Endothelial cell of umbilical vein (primary cell): ENCODE measurements at regions of chr1 and their contacts with region 1.

Region 1: DNA sequence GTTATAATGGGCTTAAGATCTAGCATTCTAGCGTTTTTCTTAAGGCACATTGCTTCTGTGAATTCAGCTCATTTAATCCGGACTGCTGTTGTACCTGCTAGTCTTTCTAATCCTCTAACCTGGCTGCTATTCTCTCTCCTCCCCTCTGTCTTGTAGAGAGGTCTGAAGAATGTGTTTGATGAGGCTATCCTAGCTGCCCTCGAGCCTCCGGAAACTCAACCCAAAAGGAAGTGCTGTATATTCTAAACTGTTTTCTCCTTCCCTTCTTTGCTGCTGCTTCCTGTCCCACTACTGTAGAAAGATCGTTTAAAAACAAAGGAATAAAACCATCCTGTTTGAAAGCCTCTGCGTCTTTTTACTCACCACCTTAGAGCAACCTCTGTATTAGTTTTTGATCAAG is 37.3 kb downstream of the CDC42 start:
- DNase-seq: peak; percentile 52
- H3K4me3 ChIP-seq: peak overlapping the region in 2 of 3 experiments; percentile 17 to 52
- H3K27ac ChIP-seq: peak overlapping the region; percentile 20
- H3K4me1 ChIP-seq: peaks cover 52% of the 10 kb centered on the region
- H3K27me3 ChIP-seq: no peaks in the 10 kb centered on the region
- CTCF ChIP-seq: no peak
- POLR2A ChIP-seq: no peak

Region 2: GRCh38 chr1:22052115-22053016 is 37.4 kb before region 1 on chr1 and contains the start of gene CDC42:
- CTCF ChIA-PET with region 1: interaction called, 3 read pairs
- POLR2A ChIA-PET with region 1: no interaction called
- dilution Hi-C with region 1: no loop called
- intact Hi-C with region 1: loop called (anchors 5 kb)
- DNase-seq: peak; percentile 94
- H3K4me3 ChIP-seq: peak within 1 kb of the TSS; percentile 37 to 94 (median 76)
- H3K27ac ChIP-seq: peak within 1 kb of the TSS; percentile 85
- H3K4me1 ChIP-seq: peaks cover 28% of the 10 kb centered on the region
- H3K27me3 ChIP-seq: no peaks in the 10 kb centered on the region
- CTCF ChIP-seq: no peak
- POLR2A ChIP-seq: peak; percentile 97
- total RNA-seq, gene CDC42: 379 and 381 TPM in 2 replicates

Region 3: GRCh38 chr1:22075718-22076117 is 14.1 kb before region 1 on chr1:
- CTCF ChIA-PET with region 1: interaction called, 4 read pairs
- POLR2A ChIA-PET with region 1: interaction called, 6 read pairs
- dilution Hi-C with region 1: no loop called
- intact Hi-C with region 1: loop called (anchors 2 kb)
- DNase-seq: no peak
- H3K4me3 ChIP-seq: no peak overlapping the region
- H3K27ac ChIP-seq: no peak overlapping the region
- H3K4me1 ChIP-seq: peaks cover 18% of the 10 kb centered on the region
- H3K27me3 ChIP-seq: no peaks in the 10 kb centered on the region
- CTCF ChIP-seq: no peak
- POLR2A ChIP-seq: no peak

Region 4: DNA sequence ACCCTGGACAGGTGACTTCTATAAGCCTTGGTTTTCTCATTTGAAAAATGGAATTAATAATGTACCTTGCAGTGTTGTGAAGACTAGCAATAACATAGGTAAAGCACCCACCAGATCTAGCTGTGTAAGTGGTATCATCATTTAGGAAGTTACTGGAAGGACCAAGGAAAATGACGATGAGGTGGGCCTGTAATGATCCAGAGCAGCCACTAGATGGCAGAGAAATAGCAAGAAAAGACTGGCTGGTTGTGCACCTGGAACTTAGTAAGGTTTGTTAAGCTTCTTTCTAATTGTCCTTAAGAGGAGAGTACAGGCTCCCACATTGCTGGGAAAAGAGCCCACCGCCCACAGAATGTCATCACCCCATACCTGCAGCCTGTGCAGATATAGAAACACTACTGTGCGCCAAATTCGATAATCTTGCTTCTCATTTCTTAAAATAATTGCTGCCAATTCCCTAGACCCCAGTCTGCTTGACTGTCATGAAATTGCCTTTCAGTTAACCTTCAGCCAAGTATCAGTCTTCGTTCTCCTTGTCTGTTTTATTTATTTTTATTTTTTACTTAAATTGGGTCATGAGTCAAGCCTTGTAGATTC is 15.9 kb after region 1 on chr1:
- CTCF ChIA-PET with region 1: interaction called, 12 read pairs
- POLR2A ChIA-PET with region 1: no interaction called
- dilution Hi-C with region 1: no loop called
- intact Hi-C with region 1: no loop called
- DNase-seq: peak; percentile 62
- H3K4me3 ChIP-seq: no peak overlapping the region
- H3K27ac ChIP-seq: no peak overlapping the region
- H3K4me1 ChIP-seq: peaks cover 14% of the 10 kb centered on the region
- H3K27me3 ChIP-seq: no peaks in the 10 kb centered on the region
- CTCF ChIP-seq: peak; percentile 66 to 76
- POLR2A ChIP-seq: no peak